ENCODE measurements at regions of chr1 and their contacts with region 1.

Region 1: DNA sequence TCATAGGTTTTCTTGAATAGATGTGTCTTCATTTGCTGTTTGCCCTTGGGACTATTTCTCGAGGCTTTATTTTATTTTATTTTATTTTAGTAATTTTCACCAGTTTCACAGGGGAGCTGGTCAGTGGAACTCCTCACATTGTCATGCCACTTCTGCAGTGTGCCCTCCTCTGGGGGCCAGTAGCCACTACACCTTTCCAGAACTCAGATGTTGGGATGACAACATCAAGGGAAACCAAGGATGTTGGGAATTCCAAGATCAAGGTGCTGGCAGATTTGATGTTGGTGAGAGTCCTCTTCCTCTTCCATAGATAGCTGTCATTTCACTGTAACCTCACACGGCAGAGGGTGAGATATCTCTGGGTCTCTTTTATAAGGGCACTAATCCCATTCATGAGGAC is 35.5 kb downstream of the SLC26A9 start:
- DNase-seq: peak in 1 of 2 experiments; percentile 25
- H3K4me3 ChIP-seq: no peak overlapping the region
- H3K4me3 Mint-ChIP-seq: no peak overlapping the region
- H3K27ac Mint-ChIP-seq: no peak overlapping the region
- H3K4me1 ChIP-seq: peaks cover 6% of the 10 kb centered on the region
- H3K4me1 Mint-ChIP-seq: peaks cover 6% of the 10 kb centered on the region
- H3K27me3 ChIP-seq: no peaks in the 10 kb centered on the region
- H3K27me3 Mint-ChIP-seq: no peaks in the 10 kb centered on the region
- CTCF ChIP-seq: peak; percentile 59 to 77

Region 2: DNA sequence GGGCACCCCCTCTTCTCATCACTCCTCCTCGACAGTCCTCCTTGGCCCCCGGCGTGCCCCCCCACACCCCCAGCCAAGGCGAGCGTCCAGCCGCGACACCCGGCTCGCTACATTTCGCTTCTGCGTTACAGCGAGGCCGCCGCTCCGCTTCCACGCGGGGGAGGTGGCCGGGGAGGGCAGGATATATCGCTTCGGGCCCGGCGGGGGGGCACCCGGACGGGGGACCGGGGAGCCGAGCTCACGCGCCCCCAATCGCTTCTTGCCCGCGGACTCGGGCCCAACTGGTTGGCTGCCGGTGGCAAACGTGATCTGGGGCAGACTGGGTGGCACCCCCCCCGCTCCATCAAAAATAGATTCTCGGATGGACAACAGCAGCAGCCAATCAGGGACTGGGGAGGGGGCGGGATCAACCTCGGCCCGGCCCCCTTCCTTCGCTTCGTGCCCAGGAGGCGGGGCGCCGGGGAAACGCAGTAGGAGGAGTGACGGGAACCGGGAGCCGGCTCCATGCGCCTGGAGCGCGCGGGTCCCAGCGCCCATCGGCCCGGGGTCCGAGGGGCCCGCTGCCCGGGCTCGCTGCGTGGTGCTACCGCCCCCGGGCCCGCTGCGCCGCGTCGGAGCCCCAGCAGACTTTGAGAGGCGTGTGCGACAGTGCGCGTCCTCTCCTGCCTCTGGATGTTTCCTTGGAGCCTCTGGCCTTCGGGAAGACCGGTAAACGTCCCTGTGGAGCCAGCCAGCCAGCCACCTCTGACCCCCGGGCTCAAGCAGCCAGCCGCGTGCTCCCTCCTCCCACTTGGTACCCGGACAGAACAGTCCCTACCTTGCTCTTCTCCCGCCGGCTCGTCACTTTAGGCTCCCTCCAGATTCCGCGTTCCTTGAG is 94.7 kb before region 1 on chr1 and contains the start of gene SLC41A1:
- CTCF ChIA-PET with region 1: no interaction called
- POLR2A ChIA-PET with region 1: no interaction called
- intact Hi-C with region 1: loop called (anchors 5 kb)
- DNase-seq: peak; percentile 87 to 89
- H3K4me3 ChIP-seq: peak within 1 kb of the TSS; percentile 81
- H3K4me3 Mint-ChIP-seq: peak within 1 kb of the TSS; percentile 95
- H3K27ac Mint-ChIP-seq: peak within 1 kb of the TSS; percentile 76
- H3K4me1 ChIP-seq: peaks cover 5% of the 10 kb centered on the region; the same call in 1 of the 2 replicates
- H3K4me1 Mint-ChIP-seq: peaks cover 15% of the 10 kb centered on the region
- H3K27me3 ChIP-seq: no peaks in the 10 kb centered on the region
- H3K27me3 Mint-ChIP-seq: no peaks in the 10 kb centered on the region
- CTCF ChIP-seq: no peak
- total RNA-seq, gene SLC41A1: 10.8 and 12.5 TPM in 2 replicates

Region 3: DNA sequence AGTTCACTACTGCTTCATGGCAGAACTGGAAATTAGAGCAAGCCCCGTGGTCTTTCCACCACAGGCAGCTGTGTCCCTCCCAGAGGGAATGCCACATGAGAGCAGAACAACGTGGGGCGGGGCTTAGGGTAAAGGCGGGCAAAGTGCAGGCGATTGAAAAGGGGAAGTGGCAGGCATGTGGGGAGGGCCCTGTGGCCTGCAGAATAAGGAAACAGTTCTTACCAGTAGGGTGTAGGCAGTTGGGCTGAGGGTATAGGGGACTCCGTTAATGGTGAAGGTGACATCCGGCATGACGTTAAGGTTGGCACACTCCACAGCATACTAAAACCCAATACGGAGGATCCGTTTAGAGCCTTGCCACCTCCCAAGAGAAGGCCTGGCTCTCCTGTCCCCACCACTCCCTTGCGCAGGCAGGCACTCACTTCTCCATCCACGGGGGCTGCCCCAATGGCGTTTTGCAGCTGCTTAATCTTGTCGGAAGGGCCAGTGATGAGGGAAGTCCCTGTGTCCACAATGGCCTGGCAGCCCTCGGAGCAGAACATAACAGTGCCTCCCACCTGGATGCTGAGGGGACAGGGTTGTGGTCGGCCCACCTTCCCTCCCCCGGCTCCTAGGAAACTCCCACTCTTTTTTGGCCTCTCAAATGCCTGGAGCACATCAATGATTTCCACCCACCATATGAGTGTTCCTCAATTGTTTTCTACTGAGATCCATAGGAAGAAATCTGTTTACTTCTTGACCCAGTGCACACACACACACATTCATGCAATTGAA is 104.5 kb after region 1 on chr1:
- CTCF ChIA-PET with region 1: no interaction called
- POLR2A ChIA-PET with region 1: no interaction called
- intact Hi-C with region 1: no loop called
- DNase-seq: no peak
- H3K4me3 ChIP-seq: no peak overlapping the region
- H3K4me3 Mint-ChIP-seq: no peak overlapping the region
- H3K27ac Mint-ChIP-seq: no peak overlapping the region
- H3K4me1 ChIP-seq: no peaks in the 10 kb centered on the region
- H3K4me1 Mint-ChIP-seq: no peaks in the 10 kb centered on the region
- H3K27me3 ChIP-seq: no peaks in the 10 kb centered on the region
- H3K27me3 Mint-ChIP-seq: no peaks in the 10 kb centered on the region
- CTCF ChIP-seq: no peak